Activated CD4-positive, alpha-beta T cell treated with anti-CD3 and anti-CD28 coated beads for 36 hours (primary cell): ENCODE measurements at regions of chrX and their contacts with region 1.

Region 1: GRCh38 chrX:21524008-21524407 is 134.1 kb downstream of the KLHL34 start:
- DNase-seq: no peak
- ATAC-seq: no peak
- H3K4me3 Mint-ChIP-seq: no peak overlapping the region
- H3K27ac Mint-ChIP-seq: no peak overlapping the region
- H3K4me1 Mint-ChIP-seq: peaks cover 4% of the 10 kb centered on the region
- H3K27me3 Mint-ChIP-seq: no peaks in the 10 kb centered on the region

Region 2: DNA sequence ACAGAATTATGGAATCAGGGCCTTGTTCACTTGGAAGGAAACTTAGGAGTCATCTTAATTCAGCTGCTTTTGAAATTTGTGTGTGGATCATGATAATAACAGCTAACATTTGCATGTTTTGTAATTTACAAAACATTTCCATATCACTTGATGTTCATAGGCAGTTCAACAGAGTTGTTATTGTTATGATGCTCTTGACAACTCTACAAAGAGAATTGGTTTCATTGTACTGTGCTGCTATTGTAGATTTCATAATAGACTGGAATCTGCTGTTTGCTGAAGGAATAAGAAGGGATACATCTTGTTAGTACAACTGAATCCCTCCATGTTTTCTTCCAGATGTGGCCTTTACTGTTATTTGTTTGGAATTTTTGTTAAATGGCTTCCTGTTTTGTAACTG is 66.3 kb before region 1 on chrX:
- CTCF ChIA-PET with region 1: no interaction called
- POLR2A ChIA-PET with region 1: no interaction called
- intact Hi-C with region 1: no loop called
- DNase-seq: no peak
- ATAC-seq: no peak
- H3K4me3 Mint-ChIP-seq: no peak overlapping the region
- H3K27ac Mint-ChIP-seq: no peak overlapping the region
- H3K4me1 Mint-ChIP-seq: peaks cover 6% of the 10 kb centered on the region
- H3K27me3 Mint-ChIP-seq: no peaks in the 10 kb centered on the region

Region 3: GRCh38 chrX:21559417-21559816 is 35.4 kb after region 1 on chrX:
- CTCF ChIA-PET with region 1: no interaction called
- POLR2A ChIA-PET with region 1: interaction called, 14 read pairs
- intact Hi-C with region 1: no loop called
- DNase-seq: no peak
- ATAC-seq: no peak
- H3K4me3 Mint-ChIP-seq: no peak overlapping the region
- H3K27ac Mint-ChIP-seq: no peak overlapping the region
- H3K4me1 Mint-ChIP-seq: peaks cover 2% of the 10 kb centered on the region
- H3K27me3 Mint-ChIP-seq: no peaks in the 10 kb centered on the region